Naive thymus-derived CD4-positive, alpha-beta T cell (primary cell): ENCODE measurements at regions of chr19 and their contacts with region 1.

Region 1: DNA sequence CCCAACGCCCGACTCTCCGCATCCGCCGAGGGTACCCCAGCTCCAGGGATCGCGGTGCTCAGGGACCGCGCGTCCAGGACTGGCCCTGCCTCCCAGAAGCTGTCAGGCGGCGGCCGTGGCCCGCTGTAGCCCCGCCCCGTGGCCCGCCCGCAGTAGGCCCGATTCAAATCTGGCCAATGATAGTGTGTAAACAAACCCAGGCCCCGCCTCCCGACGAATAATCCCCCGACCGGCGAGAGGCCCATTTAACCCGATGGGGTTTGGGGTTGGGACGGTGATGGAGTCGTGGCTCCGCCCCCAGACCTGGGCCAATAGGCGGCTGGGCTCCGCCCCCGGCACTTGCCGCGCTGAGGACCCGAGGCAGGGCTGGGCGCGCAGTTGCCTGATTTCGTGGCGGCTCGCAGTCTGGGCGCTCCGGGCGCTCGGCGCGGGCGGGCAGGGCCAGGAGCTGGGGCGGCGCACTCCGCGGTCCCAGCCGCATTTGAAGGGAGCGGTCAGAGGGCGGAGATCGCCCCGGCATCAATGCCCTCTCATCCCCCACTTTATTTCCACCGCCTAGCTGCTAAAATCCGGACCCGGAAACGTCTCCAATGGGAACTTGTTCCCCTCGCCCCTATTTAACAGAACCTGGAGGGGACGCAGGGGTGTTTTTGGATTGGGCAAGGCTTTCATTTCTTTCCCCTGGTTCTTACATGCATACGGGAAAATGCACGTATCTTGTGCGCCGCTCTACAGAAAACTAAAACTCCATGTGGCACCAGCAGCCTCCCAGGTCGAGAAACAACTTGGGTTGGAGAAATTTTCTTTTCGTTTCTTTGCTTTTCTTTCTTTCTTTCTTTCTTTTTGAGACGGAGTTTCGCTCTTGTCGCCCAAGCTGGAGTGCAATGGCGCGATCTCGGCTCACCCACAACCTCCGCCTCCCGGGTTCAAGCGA is 8.4 kb upstream of the BICRA start:
- DNase-seq: peak; percentile 86 to 99 (median 97)
- ATAC-seq: peak; percentile 98
- H3K4me3 ChIP-seq: peak overlapping the region; percentile 93
- H3K4me3 Mint-ChIP-seq: peak overlapping the region; percentile 79 to 91 (median 84)
- H3K27ac ChIP-seq: peak overlapping the region; percentile 81
- H3K27ac Mint-ChIP-seq: peak overlapping the region; percentile 75 to 94 (median 90)
- H3K4me1 ChIP-seq: peaks cover 0 to 7% of the 10 kb centered on the region in 2 donors
- H3K4me1 Mint-ChIP-seq: peaks cover 6 to 43% (median 21%) of the 10 kb centered on the region in 7 donors
- H3K27me3 ChIP-seq: no peaks in the 10 kb centered on the region
- H3K27me3 Mint-ChIP-seq: peaks cover 0 to 2% (median 0%) of the 10 kb centered on the region in 5 donors

Region 2: GRCh38 chr19:47256688-47257443 is 343.6 kb before region 1 on chr19:
- CTCF ChIA-PET with region 1: no interaction called
- POLR2A ChIA-PET with region 1: no interaction called
- intact Hi-C with region 1: loop called in 1 of 2 experiments (anchors 1 kb)
- DNase-seq: peak; percentile 94 to 100 (median 96)
- ATAC-seq: peak; percentile 88
- H3K4me3 ChIP-seq: peak overlapping the region; percentile 65
- H3K4me3 Mint-ChIP-seq: peak overlapping the region; percentile 85 to 97 (median 90)
- H3K27ac ChIP-seq: peak overlapping the region; percentile 90
- H3K27ac Mint-ChIP-seq: peak overlapping the region; percentile 90 to 99 (median 97)
- H3K4me1 ChIP-seq: peaks cover 15 to 24% of the 10 kb centered on the region in 2 donors
- H3K4me1 Mint-ChIP-seq: peaks cover 35 to 46% (median 39%) of the 10 kb centered on the region in 7 donors
- H3K27me3 ChIP-seq: no peaks in the 10 kb centered on the region
- H3K27me3 Mint-ChIP-seq: peaks cover 0 to 2% (median 0%) of the 10 kb centered on the region in 5 donors

Region 3: GRCh38 chr19:47573071-47574026 is 27.2 kb before region 1 on chr19 and contains the start of gene ZNF541:
- CTCF ChIA-PET with region 1: interaction called, 3 read pairs
- POLR2A ChIA-PET with region 1: interaction called, 48 read pairs
- intact Hi-C with region 1: loop called (anchors 1 kb)
- DNase-seq: peak; percentile 72 to 91 (median 86)
- ATAC-seq: peak; percentile 97
- H3K4me3 ChIP-seq: peak within 1 kb of the TSS; percentile 54
- H3K4me3 Mint-ChIP-seq: peak within 1 kb of the TSS; percentile 44 to 82 (median 73)
- H3K27ac ChIP-seq: peak within 1 kb of the TSS; percentile 69
- H3K27ac Mint-ChIP-seq: peak within 1 kb of the TSS; percentile 17 to 88 (median 59)
- H3K4me1 ChIP-seq: peaks cover 13 to 17% of the 10 kb centered on the region in 2 donors
- H3K4me1 Mint-ChIP-seq: peaks cover 22 to 56% (median 40%) of the 10 kb centered on the region in 7 donors
- H3K27me3 ChIP-seq: no peaks in the 10 kb centered on the region
- H3K27me3 Mint-ChIP-seq: peaks cover 0 to 36% (median 0%) of the 10 kb centered on the region in 5 donors
- total RNA-seq, gene ZNF541: 0.36 to 1.5 (median 0.95) TPM

Region 4: GRCh38 chr19:47581630-47582319 is 18.7 kb before region 1 on chr19:
- CTCF ChIA-PET with region 1: no interaction called
- POLR2A ChIA-PET with region 1: interaction called, 48 read pairs
- intact Hi-C with region 1: loop called in 1 of 2 experiments (anchors 1 kb)
- DNase-seq: no peak
- ATAC-seq: no peak
- H3K4me3 ChIP-seq: no peak overlapping the region
- H3K4me3 Mint-ChIP-seq: peak overlapping the region; percentile 56 to 85 (median 72)
- H3K27ac ChIP-seq: peak overlapping the region; percentile 42
- H3K27ac Mint-ChIP-seq: peak overlapping the region; percentile 31 to 95 (median 87)
- H3K4me1 ChIP-seq: peaks cover 25 to 49% of the 10 kb centered on the region in 2 donors
- H3K4me1 Mint-ChIP-seq: peaks cover 30 to 66% (median 45%) of the 10 kb centered on the region in 7 donors
- H3K27me3 ChIP-seq: no peaks in the 10 kb centered on the region
- H3K27me3 Mint-ChIP-seq: peaks cover 0 to 5% (median 0%) of the 10 kb centered on the region in 5 donors

Region 5: DNA sequence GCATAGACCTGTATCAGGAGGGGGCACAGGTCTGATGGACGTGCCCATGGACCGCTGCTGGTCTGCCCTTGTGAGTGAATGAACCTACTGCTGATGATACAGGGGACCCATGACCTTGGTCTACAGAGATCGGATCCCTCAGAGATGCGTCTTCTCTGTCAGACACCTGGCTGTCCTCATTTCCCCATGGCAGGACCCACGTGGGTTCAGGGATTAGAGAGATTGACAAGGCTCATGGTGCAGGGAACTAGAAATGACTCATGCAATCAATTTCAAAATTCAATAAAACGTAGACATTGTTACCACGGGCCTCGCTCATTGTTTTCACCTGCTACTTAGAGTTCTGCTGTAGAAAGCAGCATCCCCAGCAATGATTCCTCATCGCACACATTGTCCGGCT is 204.8 kb after region 1 on chr19:
- CTCF ChIA-PET with region 1: no interaction called
- POLR2A ChIA-PET with region 1: no interaction called
- intact Hi-C with region 1: no loop called
- DNase-seq: no peak
- ATAC-seq: no peak
- H3K4me3 ChIP-seq: no peak overlapping the region
- H3K4me3 Mint-ChIP-seq: no peak overlapping the region
- H3K27ac ChIP-seq: no peak overlapping the region
- H3K27ac Mint-ChIP-seq: no peak overlapping the region
- H3K4me1 ChIP-seq: no peaks in the 10 kb centered on the region
- H3K4me1 Mint-ChIP-seq: no peaks in the 10 kb centered on the region
- H3K27me3 ChIP-seq: no peaks in the 10 kb centered on the region
- H3K27me3 Mint-ChIP-seq: peaks cover 0 to 3% (median 0%) of the 10 kb centered on the region in 5 donors

Region 6: DNA sequence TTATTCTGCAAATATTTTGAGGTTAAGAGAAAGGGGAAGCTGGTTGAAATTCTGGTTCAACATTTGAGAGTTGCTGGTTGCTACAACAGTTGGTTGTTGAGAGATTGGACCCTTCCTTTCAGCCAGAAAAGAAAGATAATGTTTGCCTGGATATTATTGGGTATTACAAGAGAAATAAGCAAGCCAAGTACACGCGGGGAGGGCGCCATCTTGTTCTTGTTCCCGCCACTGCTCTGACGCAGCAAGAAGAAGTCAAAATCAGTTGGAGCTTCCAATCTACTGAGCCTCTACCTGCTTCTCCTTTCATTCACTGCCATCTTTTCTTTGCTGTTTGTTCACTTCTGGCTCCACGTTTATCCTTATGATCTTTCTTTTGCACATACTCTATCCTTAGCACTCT is 373.0 kb after region 1 on chr19:
- CTCF ChIA-PET with region 1: no interaction called
- POLR2A ChIA-PET with region 1: no interaction called
- intact Hi-C with region 1: no loop called
- DNase-seq: no peak
- ATAC-seq: no peak
- H3K4me3 ChIP-seq: no peak overlapping the region
- H3K4me3 Mint-ChIP-seq: no peak overlapping the region
- H3K27ac ChIP-seq: no peak overlapping the region
- H3K27ac Mint-ChIP-seq: no peak overlapping the region
- H3K4me1 ChIP-seq: no peaks in the 10 kb centered on the region
- H3K4me1 Mint-ChIP-seq: peaks cover 0 to 1% (median 0%) of the 10 kb centered on the region in 7 donors
- H3K27me3 ChIP-seq: peaks cover 0 to 4% of the 10 kb centered on the region in 2 donors
- H3K27me3 Mint-ChIP-seq: peaks cover 5 to 64% (median 52%) of the 10 kb centered on the region in 5 donors